ENCODE measurements at regions of chr6 and their contacts with region 1.

Region 1: DNA sequence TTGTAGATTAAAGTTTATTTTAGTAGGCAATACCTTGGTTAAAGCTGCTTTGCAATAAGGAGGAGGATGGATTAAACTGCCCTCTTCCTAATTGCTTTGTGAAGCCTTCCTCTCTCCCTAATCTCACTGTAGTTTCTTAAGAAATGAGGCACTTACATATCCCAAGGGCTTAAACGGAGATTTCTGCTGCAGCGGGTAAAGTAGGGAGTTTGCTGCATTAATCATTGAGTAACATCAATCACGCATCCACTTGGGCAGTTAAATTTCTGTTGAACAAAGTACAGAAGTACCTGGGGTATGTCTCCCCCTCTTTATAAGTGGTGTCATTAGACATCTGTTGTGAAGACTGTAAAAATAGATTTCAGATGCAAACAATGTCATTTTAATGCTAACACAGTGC is 29.5 kb upstream of the ARID1B start:
- DNase-seq: no peak
- ATAC-seq: no peak
- H3K4me3 ChIP-seq: no peak overlapping the region
- H3K27ac ChIP-seq: no peak overlapping the region
- H3K4me1 ChIP-seq: no peaks in the 10 kb centered on the region
- H3K27me3 ChIP-seq: peaks cover 4% of the 10 kb centered on the region; the same call in 1 of the 2 replicates
- CTCF ChIP-seq: no peak
- POLR2A ChIP-seq: no peak
- RAD21 ChIP-seq: no peak

Region 2: GRCh38 chr6:156306531-156306930 is 441.2 kb before region 1 on chr6:
- CTCF ChIA-PET with region 1: no interaction called
- POLR2A ChIA-PET with region 1: no interaction called
- dilution Hi-C with region 1: no loop called
- in situ Hi-C with region 1: no loop called
- intact Hi-C with region 1: no loop called
- DNase-seq: no peak
- ATAC-seq: no peak
- H3K4me3 ChIP-seq: no peak overlapping the region
- H3K27ac ChIP-seq: no peak overlapping the region
- H3K4me1 ChIP-seq: no peaks in the 10 kb centered on the region
- H3K27me3 ChIP-seq: no peaks in the 10 kb centered on the region; the same call in 1 of the 2 replicates
- CTCF ChIP-seq: no peak
- POLR2A ChIP-seq: no peak
- RAD21 ChIP-seq: no peak

Region 3: DNA sequence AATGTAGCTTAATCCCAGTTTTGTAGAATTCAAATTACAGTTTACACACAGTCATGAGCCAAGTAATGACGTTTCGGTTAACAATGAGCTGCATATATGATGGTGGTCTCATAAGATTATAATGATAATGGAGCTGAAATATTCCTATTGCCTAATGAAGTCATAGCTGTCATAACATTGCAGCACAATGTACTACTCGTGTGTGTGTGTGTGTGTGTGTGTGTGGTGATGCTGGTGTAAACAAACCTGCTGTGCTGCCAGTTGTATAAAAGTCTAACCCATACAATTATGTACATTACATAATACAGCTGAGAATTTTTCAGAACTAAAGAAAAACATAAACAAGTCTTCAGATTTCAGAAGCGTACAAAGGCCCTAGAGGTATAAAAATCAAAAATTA is 37.2 kb before region 1 on chr6:
- CTCF ChIA-PET with region 1: no interaction called
- POLR2A ChIA-PET with region 1: no interaction called
- dilution Hi-C with region 1: no loop called
- in situ Hi-C with region 1: no loop called
- intact Hi-C with region 1: loop called (anchors 5 kb)
- DNase-seq: peak; percentile 31
- ATAC-seq: no peak
- H3K4me3 ChIP-seq: no peak overlapping the region
- H3K27ac ChIP-seq: no peak overlapping the region
- H3K4me1 ChIP-seq: no peaks in the 10 kb centered on the region
- H3K27me3 ChIP-seq: peaks cover 5% of the 10 kb centered on the region
- CTCF ChIP-seq: no peak
- POLR2A ChIP-seq: no peak
- RAD21 ChIP-seq: no peak

Region 4: DNA sequence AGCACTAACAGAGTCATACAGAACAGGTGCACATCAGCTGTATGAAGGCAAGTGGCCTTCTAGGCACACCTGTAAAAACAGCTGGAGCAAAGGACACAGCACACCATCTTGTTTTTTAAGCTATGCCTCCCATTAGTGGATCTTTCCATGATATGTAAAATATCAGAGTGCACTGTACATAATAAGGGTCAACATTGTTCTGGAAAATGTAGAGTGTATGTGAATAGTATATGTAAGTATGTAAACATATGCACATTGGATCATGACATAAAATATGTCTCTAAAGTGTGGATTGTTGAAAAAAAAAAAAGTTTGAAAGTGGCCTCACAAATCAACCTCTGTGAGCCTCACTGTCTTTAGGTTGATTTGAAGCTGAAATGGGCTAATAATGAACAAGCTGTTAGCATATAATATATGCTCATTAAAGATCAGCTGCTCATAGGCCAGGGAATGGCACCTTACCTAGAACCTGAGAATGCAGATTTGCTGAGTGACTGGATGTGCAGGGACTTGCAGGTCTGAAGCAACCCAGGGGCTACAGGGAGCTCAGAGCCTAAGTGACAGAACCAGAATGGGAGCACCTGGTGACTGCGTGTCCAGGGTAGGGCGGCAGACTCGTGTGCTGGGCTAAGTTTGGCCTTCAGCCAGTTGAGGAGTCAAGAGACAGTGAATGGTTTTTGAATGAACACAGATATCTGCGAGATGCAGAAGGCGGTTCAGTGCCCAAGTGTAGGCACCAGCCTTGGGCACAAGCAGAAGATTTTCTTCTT is 377.0 kb after region 1 on chr6:
- CTCF ChIA-PET with region 1: no interaction called
- POLR2A ChIA-PET with region 1: no interaction called
- dilution Hi-C with region 1: no loop called
- in situ Hi-C with region 1: no loop called
- intact Hi-C with region 1: no loop called
- DNase-seq: no peak
- ATAC-seq: no peak
- H3K4me3 ChIP-seq: no peak overlapping the region
- H3K27ac ChIP-seq: no peak overlapping the region
- H3K4me1 ChIP-seq: peaks cover 3% of the 10 kb centered on the region
- H3K27me3 ChIP-seq: no peaks in the 10 kb centered on the region
- CTCF ChIP-seq: no peak
- POLR2A ChIP-seq: no peak
- RAD21 ChIP-seq: no peak

Region 5: GRCh38 chr6:157380776-157381561 is 633.3 kb after region 1 on chr6 and contains the start of gene ZDHHC14:
- CTCF ChIA-PET with region 1: no interaction called
- POLR2A ChIA-PET with region 1: no interaction called
- dilution Hi-C with region 1: no loop called
- in situ Hi-C with region 1: no loop called
- intact Hi-C with region 1: no loop called
- DNase-seq: peak; percentile 80
- ATAC-seq: peak; percentile 86
- H3K4me3 ChIP-seq: peak within 1 kb of the TSS; percentile 71
- H3K27ac ChIP-seq: peak within 1 kb of the TSS; percentile 69
- H3K4me1 ChIP-seq: no peaks in the 10 kb centered on the region
- H3K27me3 ChIP-seq: no peaks in the 10 kb centered on the region
- CTCF ChIP-seq: no peak
- POLR2A ChIP-seq: no peak
- RAD21 ChIP-seq: no peak
- total RNA-seq, gene ZDHHC14: 0.56 and 0.90 TPM in 2 replicates

Region 6: GRCh38 chr6:157732021-157732417 is 984.3 kb after region 1 on chr6:
- CTCF ChIA-PET with region 1: no interaction called
- POLR2A ChIA-PET with region 1: no interaction called
- dilution Hi-C with region 1: no loop called
- in situ Hi-C with region 1: no loop called
- intact Hi-C with region 1: no loop called
- DNase-seq: no peak
- ATAC-seq: no peak
- H3K4me3 ChIP-seq: no peak overlapping the region
- H3K27ac ChIP-seq: no peak overlapping the region
- H3K4me1 ChIP-seq: no peaks in the 10 kb centered on the region
- H3K27me3 ChIP-seq: peaks cover 13% of the 10 kb centered on the region
- CTCF ChIP-seq: no peak
- POLR2A ChIP-seq: no peak
- RAD21 ChIP-seq: no peak